ENCODE measurements at regions of chr17 and their contacts with region 1.

Region 1: GRCh38 chr17:17313350-17313991 is 10.3 kb downstream of the NT5M start:
- DNase-seq: peak in 2 of 3 donors; percentile 26 to 37
- H3K4me3 ChIP-seq: no peak overlapping the region
- H3K4me3 Mint-ChIP-seq: no peak overlapping the region
- H3K27ac ChIP-seq: no peak overlapping the region
- H3K27ac Mint-ChIP-seq: no peak overlapping the region
- H3K4me1 ChIP-seq: peaks cover 10% of the 10 kb centered on the region in 2 donors
- H3K4me1 Mint-ChIP-seq: peaks cover 12% of the 10 kb centered on the region
- H3K27me3 ChIP-seq: no peaks in the 10 kb centered on the region
- H3K27me3 Mint-ChIP-seq: peaks cover 0 to 2% (median 0%) of the 10 kb centered on the region in 3 donors
- CTCF ChIP-seq: peak; percentile 58

Region 2: GRCh38 chr17:17001874-17002520 is 311.5 kb before region 1 on chr17:
- intact Hi-C with region 1: loop called (anchors 5 to 10 kb)
- DNase-seq: peak; percentile 51 to 72 (median 61)
- H3K4me3 ChIP-seq: no peak overlapping the region
- H3K4me3 Mint-ChIP-seq: no peak overlapping the region
- H3K27ac ChIP-seq: no peak overlapping the region
- H3K27ac Mint-ChIP-seq: no peak overlapping the region
- H3K4me1 ChIP-seq: peaks cover 0 to 5% of the 10 kb centered on the region in 2 donors
- H3K4me1 Mint-ChIP-seq: peaks cover 2% of the 10 kb centered on the region
- H3K27me3 ChIP-seq: no peaks in the 10 kb centered on the region
- H3K27me3 Mint-ChIP-seq: peaks cover 4 to 17% (median 11%) of the 10 kb centered on the region in 3 donors
- CTCF ChIP-seq: peak; percentile 96

Region 3: DNA sequence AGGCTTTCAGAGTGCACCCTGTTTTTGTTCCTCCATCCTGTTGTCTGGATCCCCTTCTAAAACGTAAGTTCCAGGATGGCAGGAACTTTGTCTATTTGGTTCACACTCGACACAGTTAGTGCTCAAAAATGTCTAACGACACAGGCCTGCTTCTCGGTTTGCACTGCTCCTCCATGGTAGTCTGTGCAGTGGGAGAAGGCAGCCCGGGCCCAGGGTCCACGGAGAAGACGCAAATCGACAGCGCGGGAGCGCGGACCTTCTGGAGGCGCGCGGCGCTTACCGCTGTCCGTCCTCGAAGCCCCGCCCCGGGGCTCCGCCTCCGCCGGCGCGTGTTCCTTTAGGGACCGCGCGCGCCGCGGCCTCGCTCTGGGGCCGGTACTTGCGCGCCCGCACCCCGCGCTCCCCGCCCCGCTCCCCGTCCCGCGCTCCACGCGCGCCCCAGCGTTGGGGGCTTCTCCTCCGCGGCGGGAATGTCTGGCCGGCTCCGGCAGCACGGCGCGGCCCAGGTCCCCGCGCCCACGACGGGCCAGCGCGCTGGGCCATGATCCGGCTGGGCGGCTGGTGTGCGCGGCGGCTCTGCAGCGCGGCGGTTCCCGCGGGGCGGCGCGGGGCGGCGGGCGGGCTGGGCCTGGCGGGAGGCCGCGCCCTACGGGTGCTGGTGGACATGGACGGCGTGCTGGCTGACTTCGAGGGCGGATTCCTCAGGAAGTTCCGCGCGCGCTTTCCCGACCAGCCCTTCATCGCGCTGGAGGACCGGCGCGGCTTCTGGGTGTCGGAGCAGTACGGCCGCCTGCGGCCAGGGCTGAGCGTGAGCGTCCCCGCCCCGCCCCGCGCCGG is 10.2 kb before region 1 on chr17 and contains the start of gene NT5M:
- intact Hi-C with region 1: no loop called
- DNase-seq: peak; percentile 38 to 51 (median 44)
- H3K4me3 ChIP-seq: peak within 1 kb of the TSS; percentile 34 to 75 (median 39)
- H3K4me3 Mint-ChIP-seq: peak within 1 kb of the TSS; percentile 83 to 93
- H3K27ac ChIP-seq: no peak within 1 kb of the TSS
- H3K27ac Mint-ChIP-seq: peak within 1 kb of the TSS in 2 of 7 donors; percentile 11 to 54
- H3K4me1 ChIP-seq: peaks cover 49 to 63% of the 10 kb centered on the region in 2 donors
- H3K4me1 Mint-ChIP-seq: peaks cover 55% of the 10 kb centered on the region
- H3K27me3 ChIP-seq: peaks cover 0 to 6% of the 10 kb centered on the region in 2 donors
- H3K27me3 Mint-ChIP-seq: peaks cover 5 to 17% (median 7%) of the 10 kb centered on the region in 3 donors
- CTCF ChIP-seq: no peak
- polyA plus RNA-seq, gene NT5M: 0.23 to 0.57 (median 0.25) TPM

Region 4: DNA sequence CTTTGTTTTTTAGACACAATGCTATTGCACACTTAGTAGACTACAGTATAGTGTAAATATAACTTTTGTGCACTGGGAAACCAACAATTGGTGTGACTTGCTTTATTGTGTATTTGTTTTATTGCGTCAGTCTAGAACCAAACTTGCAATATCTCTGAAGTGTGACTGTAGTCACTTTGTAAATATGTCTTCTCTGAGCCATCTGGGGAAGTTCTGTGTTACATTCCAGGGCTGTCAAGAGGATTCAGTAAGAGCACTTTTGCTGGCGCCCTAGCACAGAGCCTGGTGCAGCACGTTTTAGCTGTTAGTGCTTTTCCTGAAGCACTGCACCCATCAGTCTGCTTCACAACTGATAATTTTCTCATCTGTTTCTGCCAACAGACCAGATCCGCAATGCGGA is 62.9 kb after region 1 on chr17:
- intact Hi-C with region 1: no loop called
- DNase-seq: no peak
- H3K4me3 ChIP-seq: no peak overlapping the region
- H3K4me3 Mint-ChIP-seq: no peak overlapping the region
- H3K27ac ChIP-seq: no peak overlapping the region
- H3K27ac Mint-ChIP-seq: no peak overlapping the region
- H3K4me1 ChIP-seq: no peaks in the 10 kb centered on the region
- H3K4me1 Mint-ChIP-seq: no peaks in the 10 kb centered on the region
- H3K27me3 ChIP-seq: no peaks in the 10 kb centered on the region
- H3K27me3 Mint-ChIP-seq: peaks cover 0 to 2% (median 2%) of the 10 kb centered on the region in 3 donors
- CTCF ChIP-seq: no peak

Region 5: GRCh38 chr17:17416007-17416399 is 102.5 kb after region 1 on chr17:
- intact Hi-C with region 1: no loop called
- DNase-seq: peak; percentile 49 to 61 (median 58)
- H3K4me3 ChIP-seq: peak overlapping the region in 1 of 3 experiments; percentile 19
- H3K4me3 Mint-ChIP-seq: no peak overlapping the region
- H3K27ac ChIP-seq: peak overlapping the region in 1 of 2 donors; percentile 53
- H3K27ac Mint-ChIP-seq: peak overlapping the region in 6 of 7 donors; percentile 20 to 86 (median 63)
- H3K4me1 ChIP-seq: peaks cover 11 to 12% of the 10 kb centered on the region in 2 donors
- H3K4me1 Mint-ChIP-seq: peaks cover 16% of the 10 kb centered on the region
- H3K27me3 ChIP-seq: no peaks in the 10 kb centered on the region
- H3K27me3 Mint-ChIP-seq: peaks cover 0 to 6% (median 3%) of the 10 kb centered on the region in 3 donors
- CTCF ChIP-seq: no peak